Left ventricle myocardium superior (tissue), 1 donor: ENCODE measurements at regions of chr10 and their contacts with region 1.

Region 1: DNA sequence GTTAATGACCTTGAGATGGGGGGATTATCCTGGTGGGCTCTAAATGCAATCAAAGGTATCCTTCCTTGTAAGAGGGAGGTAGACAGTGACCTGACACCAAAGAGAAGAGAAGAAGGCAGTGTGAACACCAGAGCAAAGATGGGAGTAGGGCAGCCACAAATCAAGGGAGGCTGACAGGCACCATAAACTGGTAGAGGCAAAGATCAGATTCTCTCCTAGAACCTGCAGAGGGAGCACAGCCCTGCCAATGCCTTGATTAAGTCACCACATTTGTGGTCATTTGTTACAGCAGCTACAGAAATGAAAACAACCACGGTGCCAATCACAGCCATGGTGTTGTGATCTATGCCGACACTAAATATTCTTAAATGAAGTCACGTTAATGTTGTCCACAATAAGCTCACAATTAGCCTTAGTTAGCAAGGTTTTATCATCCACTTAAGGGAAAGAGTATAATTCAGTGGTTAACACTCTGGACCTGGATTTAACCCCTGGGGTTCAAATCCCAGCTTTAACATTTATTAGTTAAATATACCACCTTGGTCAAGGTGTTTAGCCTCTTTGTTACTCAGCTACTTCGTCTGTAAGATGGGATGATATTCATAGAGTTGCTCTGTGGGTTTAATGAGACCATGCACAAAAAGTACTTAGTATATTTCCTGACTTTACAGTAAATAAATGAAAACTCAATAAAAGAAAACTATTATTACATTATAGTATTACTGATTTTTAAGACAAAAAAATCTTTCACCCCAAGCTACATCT is 70.8 kb downstream of the SGMS1 start:
- DNase-seq: no peak
- ATAC-seq: no peak

Region 2: DNA sequence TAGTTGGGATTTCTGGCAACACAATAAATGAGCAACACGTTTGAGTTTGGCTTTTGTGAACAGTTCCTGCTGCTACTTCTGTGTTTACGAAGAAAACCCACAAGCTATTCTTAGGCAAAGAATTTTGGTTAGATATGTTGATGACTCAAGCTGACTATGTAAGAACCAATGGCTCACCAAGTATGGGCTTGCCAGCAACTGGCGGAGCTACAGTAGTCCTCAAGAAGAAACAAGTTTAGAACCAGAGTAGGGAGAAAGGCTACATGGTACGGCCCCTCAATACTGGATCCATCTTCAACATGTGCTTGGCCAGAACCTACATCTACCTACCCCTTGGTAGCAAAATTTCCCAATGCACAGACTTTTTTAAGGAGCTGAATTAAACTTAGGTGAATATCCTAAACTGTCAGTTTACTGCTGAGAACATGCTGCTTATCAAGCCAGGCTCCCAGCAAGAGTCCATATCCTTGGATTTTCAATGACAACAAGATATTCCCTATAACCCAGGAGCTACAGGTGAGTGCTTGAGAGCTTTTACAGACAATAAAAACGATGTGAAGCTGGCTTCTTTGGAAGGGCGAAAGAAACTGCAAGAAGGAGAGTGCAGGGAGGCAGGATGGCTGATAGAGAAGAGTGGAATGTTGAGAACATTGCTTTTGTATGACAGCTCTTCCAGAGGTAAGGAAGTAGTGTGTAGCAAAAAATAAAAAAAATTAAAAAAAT is 227.3 kb before region 1 on chr10:
- intact Hi-C with region 1: loop called (anchors 10 kb)
- DNase-seq: peak; percentile 60
- ATAC-seq: peak; percentile 78

Region 3: GRCh38 chr10:50605269-50606263 is 52.6 kb after region 1 on chr10:
- intact Hi-C with region 1: loop called (anchors 5 kb)
- DNase-seq: no peak
- ATAC-seq: peak; percentile 91